ENCODE measurements at regions of chr16 and their contacts with region 1.

Region 1: DNA sequence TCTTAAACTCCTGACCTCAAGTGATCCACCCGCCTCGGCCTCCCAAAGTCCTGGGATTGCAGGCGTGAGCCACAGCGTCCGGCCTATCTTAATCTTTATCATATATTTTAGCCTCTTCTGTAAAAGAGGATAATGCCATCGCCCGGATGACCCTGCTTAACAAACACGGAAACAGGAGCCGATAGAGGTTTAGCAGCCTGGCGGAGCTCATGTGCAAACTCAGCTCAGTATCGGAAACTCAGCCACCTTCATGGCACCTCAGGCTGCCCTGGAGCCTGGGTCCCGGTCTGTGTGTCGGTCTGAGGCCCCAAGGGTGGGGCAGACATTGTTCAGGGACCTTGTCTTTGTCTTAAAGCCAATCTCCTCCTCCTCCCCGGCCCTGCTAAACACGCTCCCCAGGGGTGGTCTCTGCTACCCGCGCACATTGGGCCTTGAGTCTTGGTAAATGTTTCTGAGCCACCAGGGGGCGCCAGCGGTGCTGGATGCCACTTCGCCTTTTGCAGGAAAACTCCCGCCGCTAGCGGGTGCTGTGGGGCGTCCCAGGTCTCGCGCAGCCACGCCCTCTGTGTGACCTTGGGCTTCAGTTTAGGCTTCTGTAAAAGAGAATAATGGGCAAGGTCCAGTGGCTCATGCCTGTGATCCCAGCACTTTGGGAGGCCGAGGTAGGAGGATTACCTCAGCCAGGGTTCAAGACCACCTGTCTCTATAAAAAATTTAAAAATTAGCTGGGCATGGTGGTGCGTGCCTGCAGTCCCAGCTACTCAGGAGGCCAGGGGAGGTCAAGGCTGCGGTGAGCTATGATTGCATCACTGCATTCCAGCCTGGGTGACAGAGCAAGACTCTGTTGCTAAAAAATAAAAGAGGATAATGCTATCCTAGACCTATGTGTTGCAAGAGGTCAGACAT is 2.7 kb downstream of the CETP start:
- DNase-seq: peak; percentile 98
- H3K4me3 Mint-ChIP-seq: no peak overlapping the region
- H3K27ac Mint-ChIP-seq: no peak overlapping the region
- H3K4me1 Mint-ChIP-seq: peaks cover 19% of the 10 kb centered on the region
- H3K27me3 Mint-ChIP-seq: no peaks in the 10 kb centered on the region

Region 2: GRCh38 chr16:56866943-56867830 is 97.3 kb before region 1 on chr16:
- CTCF ChIA-PET with region 1: interaction called, 21 read pairs
- intact Hi-C with region 1: no loop called
- DNase-seq: peak; percentile 64
- H3K4me3 Mint-ChIP-seq: no peak overlapping the region
- H3K27ac Mint-ChIP-seq: no peak overlapping the region
- H3K4me1 Mint-ChIP-seq: peaks cover 15% of the 10 kb centered on the region
- H3K27me3 Mint-ChIP-seq: no peaks in the 10 kb centered on the region

Region 3: GRCh38 chr16:56974549-56975300 is 10.2 kb after region 1 on chr16:
- CTCF ChIA-PET with region 1: interaction called, 22 read pairs
- intact Hi-C with region 1: no loop called
- DNase-seq: no peak
- H3K4me3 Mint-ChIP-seq: no peak overlapping the region
- H3K27ac Mint-ChIP-seq: no peak overlapping the region
- H3K4me1 Mint-ChIP-seq: peaks cover 24% of the 10 kb centered on the region
- H3K27me3 Mint-ChIP-seq: no peaks in the 10 kb centered on the region

Region 4: DNA sequence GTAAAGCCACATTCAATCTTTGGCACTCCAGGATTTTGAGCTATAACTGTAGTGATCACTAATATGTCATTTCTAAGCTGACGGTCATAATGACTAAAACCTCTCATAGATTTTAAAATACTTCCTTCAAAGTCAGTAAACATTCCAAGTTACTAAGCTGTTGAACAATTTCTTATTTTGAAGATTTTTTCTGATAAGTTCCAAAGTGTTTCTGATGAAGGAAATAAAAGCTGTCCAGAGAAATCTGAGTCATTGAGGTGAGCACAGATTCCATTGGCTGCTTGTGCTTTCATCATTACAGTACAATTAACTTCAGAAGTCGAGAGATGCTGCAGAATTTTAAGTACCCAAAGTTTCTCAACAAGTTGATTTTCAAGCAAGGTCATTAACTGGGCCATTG is 48.7 kb after region 1 on chr16:
- CTCF ChIA-PET with region 1: interaction called, 16 read pairs
- intact Hi-C with region 1: loop called (anchors 1 kb)
- DNase-seq: no peak
- H3K4me3 Mint-ChIP-seq: no peak overlapping the region
- H3K27ac Mint-ChIP-seq: peak overlapping the region; percentile 97
- H3K4me1 Mint-ChIP-seq: peaks cover 85% of the 10 kb centered on the region
- H3K27me3 Mint-ChIP-seq: no peaks in the 10 kb centered on the region

Region 5: GRCh38 chr16:57051696-57052228 is 87.3 kb after region 1 on chr16:
- CTCF ChIA-PET with region 1: interaction called, 27 read pairs
- intact Hi-C with region 1: no loop called
- DNase-seq: peak; percentile 25
- H3K4me3 Mint-ChIP-seq: no peak overlapping the region
- H3K27ac Mint-ChIP-seq: peak overlapping the region; percentile 56
- H3K4me1 Mint-ChIP-seq: peaks cover 45% of the 10 kb centered on the region
- H3K27me3 Mint-ChIP-seq: no peaks in the 10 kb centered on the region

Region 6: DNA sequence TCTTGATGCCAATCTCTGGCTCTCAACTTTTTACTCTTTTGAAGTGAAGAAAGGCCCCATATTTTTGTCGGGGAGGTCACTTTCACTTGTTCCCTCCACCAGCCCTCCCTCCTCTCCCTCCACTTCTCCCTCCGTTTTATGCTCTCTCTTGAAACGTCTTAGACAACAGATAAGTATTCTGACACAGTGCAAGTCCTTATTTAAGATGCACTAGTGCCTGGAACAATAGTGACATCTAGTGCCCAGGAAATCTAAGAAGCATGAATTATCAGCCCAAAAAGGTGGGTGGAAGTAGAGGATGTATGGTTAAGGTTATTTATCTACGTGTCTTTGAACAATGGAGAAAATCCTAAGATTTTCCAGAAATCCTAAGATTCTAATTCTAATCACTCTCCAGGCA is 203.5 kb after region 1 on chr16:
- CTCF ChIA-PET with region 1: interaction called, 3 read pairs
- intact Hi-C with region 1: loop called (anchors 1 kb)
- DNase-seq: no peak
- H3K4me3 Mint-ChIP-seq: no peak overlapping the region
- H3K27ac Mint-ChIP-seq: no peak overlapping the region
- H3K4me1 Mint-ChIP-seq: peaks cover 7% of the 10 kb centered on the region
- H3K27me3 Mint-ChIP-seq: no peaks in the 10 kb centered on the region